ENCODE measurements at regions of chr3 and their contacts with region 1.

Region 1: DNA sequence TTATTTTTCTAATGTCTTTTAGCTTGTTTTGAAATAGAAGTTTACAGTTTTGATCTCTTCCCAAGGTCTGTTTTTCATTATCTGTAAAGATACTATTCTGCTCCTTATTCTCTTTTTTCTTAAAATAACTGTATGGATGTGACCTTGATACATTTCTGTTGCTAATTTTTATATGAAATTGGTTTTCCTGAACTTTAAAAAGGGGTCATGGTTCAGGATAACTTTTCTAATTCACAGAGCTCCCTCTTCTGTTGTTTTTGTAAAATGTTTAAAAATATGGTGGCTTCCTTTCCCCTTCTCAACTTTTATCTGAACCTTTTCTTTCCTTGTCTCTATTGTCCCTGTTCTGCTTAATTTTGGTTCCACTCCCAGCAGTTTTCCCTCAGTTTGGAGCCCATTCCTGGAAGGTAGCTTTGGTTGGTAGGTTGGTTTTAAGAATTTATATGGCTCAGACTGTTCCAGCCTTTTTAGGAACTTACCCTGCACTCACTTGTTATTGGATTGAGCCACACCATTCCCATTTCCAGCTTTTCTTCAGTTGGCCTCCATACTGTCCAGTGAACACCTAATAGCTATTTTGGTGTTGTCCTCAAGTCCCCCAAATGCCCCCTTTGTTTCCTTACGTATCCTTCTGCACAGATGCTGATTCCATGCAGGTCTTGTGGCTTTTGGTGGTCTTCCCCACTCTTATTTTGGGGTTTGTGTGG is 70.3 kb downstream of the SLMAP start:
- DNase-seq: no peak
- ATAC-seq: no peak
- H3K4me3 ChIP-seq: no peak overlapping the region
- H3K27ac ChIP-seq: no peak overlapping the region
- H3K4me1 ChIP-seq: no peaks in the 10 kb centered on the region; the same call in 1 of the 2 replicates
- H3K27me3 ChIP-seq: no peaks in the 10 kb centered on the region
- CTCF ChIP-seq: peak in 1 of 3 experiments; percentile 45; a peak in 2 of 6 replicates
- EP300 ChIP-seq: no peak
- POLR2A ChIP-seq: no peak
- RAD21 ChIP-seq: peak; percentile 63

Region 2: GRCh38 chr3:57397175-57398026 is 429.0 kb before region 1 on chr3:
- CTCF ChIA-PET with region 1: interaction called, 63 read pairs
- POLR2A ChIA-PET with region 1: no interaction called
- RAD21 ChIA-PET with region 1: interaction called, 35 read pairs
- SMC1A ChIA-PET with region 1: interaction called, 25 read pairs
- in situ Hi-C with region 1: no loop called
- intact Hi-C with region 1: no loop called
- DNase-seq: peak; percentile 39
- ATAC-seq: peak; percentile 100
- H3K4me3 ChIP-seq: no peak overlapping the region
- H3K27ac ChIP-seq: no peak overlapping the region
- H3K4me1 ChIP-seq: no peaks in the 10 kb centered on the region
- H3K27me3 ChIP-seq: no peaks in the 10 kb centered on the region
- CTCF ChIP-seq: peak; percentile 87 to 97 (median 97)
- EP300 ChIP-seq: no peak
- POLR2A ChIP-seq: no peak
- RAD21 ChIP-seq: peak; percentile 94

Region 3: DNA sequence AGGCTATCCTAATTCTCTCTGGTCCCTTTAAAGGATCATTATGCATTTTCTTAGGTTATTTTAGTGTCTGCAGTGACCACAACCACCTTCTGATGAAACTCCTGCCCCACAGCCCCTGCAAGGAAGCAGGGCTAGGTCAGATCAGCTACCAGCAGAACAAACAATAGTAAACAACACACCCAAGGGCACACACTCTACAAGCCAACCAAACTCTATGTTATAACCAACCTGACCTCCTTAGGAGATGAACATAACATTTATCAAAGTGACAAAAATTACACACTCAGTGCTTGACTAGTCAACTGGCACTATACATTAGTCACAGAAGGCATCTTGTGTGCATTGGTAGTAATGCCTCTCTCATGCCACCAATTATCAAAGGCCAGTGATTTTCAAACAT is 150.9 kb before region 1 on chr3:
- CTCF ChIA-PET with region 1: interaction called, 3 read pairs
- POLR2A ChIA-PET with region 1: no interaction called
- RAD21 ChIA-PET with region 1: interaction called, 14 read pairs
- SMC1A ChIA-PET with region 1: interaction called, 6 read pairs
- in situ Hi-C with region 1: no loop called
- intact Hi-C with region 1: no loop called
- DNase-seq: no peak
- ATAC-seq: peak; percentile 47
- H3K4me3 ChIP-seq: no peak overlapping the region
- H3K27ac ChIP-seq: no peak overlapping the region
- H3K4me1 ChIP-seq: peaks cover 13% of the 10 kb centered on the region
- H3K27me3 ChIP-seq: no peaks in the 10 kb centered on the region
- CTCF ChIP-seq: no peak
- EP300 ChIP-seq: no peak
- POLR2A ChIP-seq: no peak
- RAD21 ChIP-seq: no peak

Region 4: DNA sequence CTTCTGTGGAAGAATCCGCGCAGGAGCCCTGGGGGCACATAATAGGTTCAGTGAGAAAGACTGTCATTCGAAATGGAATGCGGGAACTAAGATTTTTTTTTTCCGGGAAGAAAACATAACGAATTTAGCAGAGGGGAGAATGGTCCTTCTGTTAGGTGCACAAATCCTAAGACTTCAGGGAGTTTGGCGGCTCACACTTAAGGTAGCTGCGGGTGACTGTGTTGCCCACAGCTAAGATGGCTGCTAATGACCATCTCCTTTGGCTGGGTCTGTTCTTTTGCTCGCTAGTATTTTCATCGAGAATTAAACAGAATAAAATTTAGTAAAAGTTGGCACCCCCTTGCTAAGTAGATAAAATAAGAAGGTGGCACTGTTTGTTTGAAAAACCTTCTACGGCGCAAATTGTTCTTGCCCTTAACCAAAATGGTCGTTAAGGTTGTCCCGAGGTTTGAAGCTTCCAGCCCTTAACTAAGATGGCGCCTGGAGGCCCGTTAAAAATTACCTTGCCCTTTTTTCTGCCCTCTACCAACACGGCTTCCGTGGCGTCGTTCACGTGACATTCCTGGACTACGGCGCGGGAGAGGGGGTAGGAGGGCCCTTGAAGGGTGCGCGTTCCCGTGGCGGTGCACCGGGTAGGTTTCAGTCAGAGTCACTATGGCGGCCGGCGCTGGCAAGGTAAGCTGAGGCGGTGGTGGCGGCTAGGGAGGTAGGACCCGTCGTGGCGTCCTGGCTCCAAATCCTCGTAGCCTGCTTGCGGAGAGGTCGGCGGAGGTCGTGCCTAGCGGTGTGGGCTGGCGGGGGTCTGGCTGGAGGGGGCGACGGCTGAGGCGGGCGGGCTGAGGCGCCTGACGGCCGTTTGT is 70.5 kb before region 1 on chr3 and contains the start of gene SLMAP:
- CTCF ChIA-PET with region 1: interaction called, 24 read pairs
- POLR2A ChIA-PET with region 1: no interaction called
- RAD21 ChIA-PET with region 1: interaction called, 12 read pairs
- SMC1A ChIA-PET with region 1: interaction called, 18 read pairs
- in situ Hi-C with region 1: no loop called
- intact Hi-C with region 1: loop called (anchors 5 kb)
- DNase-seq: peak; percentile 90
- ATAC-seq: peak; percentile 95
- H3K4me3 ChIP-seq: peak within 1 kb of the TSS; percentile 77
- H3K27ac ChIP-seq: peak within 1 kb of the TSS; percentile 91
- H3K4me1 ChIP-seq: peaks cover 6% of the 10 kb centered on the region; the same call in 1 of the 2 replicates
- H3K27me3 ChIP-seq: no peaks in the 10 kb centered on the region
- CTCF ChIP-seq: no peak
- EP300 ChIP-seq: 0 out of 4 replicates have a peak, but pooled peaks of 1 of the 2 experiments have one; percentile 30
- POLR2A ChIP-seq: peak; percentile 98
- RAD21 ChIP-seq: no peak
- polyA plus RNA-seq, gene SLMAP: 8.3 to 10.4 TPM

Region 5: GRCh38 chr3:57796261-57796660 is 30.1 kb before region 1 on chr3:
- CTCF ChIA-PET with region 1: interaction called, 15 read pairs
- POLR2A ChIA-PET with region 1: no interaction called
- RAD21 ChIA-PET with region 1: interaction called, 4 read pairs
- SMC1A ChIA-PET with region 1: interaction called, 23 read pairs
- in situ Hi-C with region 1: no loop called
- intact Hi-C with region 1: no loop called
- DNase-seq: no peak
- ATAC-seq: no peak
- H3K4me3 ChIP-seq: no peak overlapping the region
- H3K27ac ChIP-seq: no peak overlapping the region
- H3K4me1 ChIP-seq: peaks cover 12% of the 10 kb centered on the region
- H3K27me3 ChIP-seq: no peaks in the 10 kb centered on the region
- CTCF ChIP-seq: no peak
- EP300 ChIP-seq: no peak
- POLR2A ChIP-seq: no peak
- RAD21 ChIP-seq: no peak